PC-9 (cell line): ENCODE measurements at regions of chr20 and their contacts with region 1.

Region 1: GRCh38 chr20:5126512-5127203 is at the start of gene CDS2:
- DNase-seq: peak; percentile 97 to 100
- H3K4me3 ChIP-seq: peak within 1 kb of the TSS; percentile 69
- H3K27ac ChIP-seq: peak within 1 kb of the TSS; percentile 67
- H3K4me1 ChIP-seq: peaks cover 14% of the 10 kb centered on the region
- H3K27me3 ChIP-seq: no peaks in the 10 kb centered on the region
- CTCF ChIP-seq: peak; percentile 59; the same call in 1 of the 2 replicates
- total RNA-seq, gene CDS2: 37.0 and 42.8 TPM in 2 replicates

Region 2: DNA sequence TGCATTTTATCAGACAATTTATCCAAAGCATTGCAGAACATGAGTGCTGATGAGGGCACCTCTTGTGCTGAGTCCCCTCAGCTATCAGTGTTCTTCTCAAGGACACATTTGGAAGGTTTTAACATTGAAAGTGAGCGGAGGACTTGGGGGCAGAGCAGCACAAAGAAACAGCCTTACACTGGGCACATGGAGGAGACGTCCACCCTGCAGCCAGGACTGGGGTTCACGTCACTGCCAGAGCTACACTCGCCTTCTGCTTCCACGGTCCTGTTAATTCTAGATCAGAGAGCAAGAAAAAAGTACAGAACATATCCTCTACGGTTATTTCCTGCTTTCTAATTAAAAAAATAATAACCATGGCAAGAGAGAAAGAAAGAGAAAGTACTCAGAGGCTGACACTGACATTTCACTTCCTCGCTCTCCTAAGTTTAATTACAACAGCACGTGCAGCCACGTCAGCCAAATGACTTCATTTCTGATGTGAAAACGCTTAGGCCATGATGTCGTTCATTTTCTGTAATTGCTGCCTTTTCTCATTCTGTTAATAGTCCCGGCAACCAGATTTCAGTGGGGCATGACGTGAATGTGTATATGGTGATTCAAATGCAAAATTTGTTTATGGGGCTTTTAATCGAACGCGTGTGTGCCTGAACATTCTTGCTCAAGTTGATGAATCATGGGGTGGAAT is 399.8 kb before region 1 on chr20:
- CTCF ChIA-PET with region 1: no interaction called
- POLR2A ChIA-PET with region 1: interaction called, 21 read pairs
- intact Hi-C with region 1: no loop called
- DNase-seq: no peak
- H3K4me3 ChIP-seq: no peak overlapping the region
- H3K27ac ChIP-seq: no peak overlapping the region
- H3K4me1 ChIP-seq: no peaks in the 10 kb centered on the region
- H3K27me3 ChIP-seq: no peaks in the 10 kb centered on the region
- CTCF ChIP-seq: no peak

Region 3: GRCh38 chr20:5156675-5157448 is 30.2 kb after region 1 on chr20:
- CTCF ChIA-PET with region 1: interaction called, 16 read pairs
- POLR2A ChIA-PET with region 1: interaction called, 4 read pairs
- intact Hi-C with region 1: loop called (anchors 2 kb)
- DNase-seq: peak; percentile 51 to 91
- H3K4me3 ChIP-seq: no peak overlapping the region
- H3K27ac ChIP-seq: peak overlapping the region; percentile 98
- H3K4me1 ChIP-seq: peaks cover 91% of the 10 kb centered on the region
- H3K27me3 ChIP-seq: no peaks in the 10 kb centered on the region
- CTCF ChIP-seq: no peak

Region 4: DNA sequence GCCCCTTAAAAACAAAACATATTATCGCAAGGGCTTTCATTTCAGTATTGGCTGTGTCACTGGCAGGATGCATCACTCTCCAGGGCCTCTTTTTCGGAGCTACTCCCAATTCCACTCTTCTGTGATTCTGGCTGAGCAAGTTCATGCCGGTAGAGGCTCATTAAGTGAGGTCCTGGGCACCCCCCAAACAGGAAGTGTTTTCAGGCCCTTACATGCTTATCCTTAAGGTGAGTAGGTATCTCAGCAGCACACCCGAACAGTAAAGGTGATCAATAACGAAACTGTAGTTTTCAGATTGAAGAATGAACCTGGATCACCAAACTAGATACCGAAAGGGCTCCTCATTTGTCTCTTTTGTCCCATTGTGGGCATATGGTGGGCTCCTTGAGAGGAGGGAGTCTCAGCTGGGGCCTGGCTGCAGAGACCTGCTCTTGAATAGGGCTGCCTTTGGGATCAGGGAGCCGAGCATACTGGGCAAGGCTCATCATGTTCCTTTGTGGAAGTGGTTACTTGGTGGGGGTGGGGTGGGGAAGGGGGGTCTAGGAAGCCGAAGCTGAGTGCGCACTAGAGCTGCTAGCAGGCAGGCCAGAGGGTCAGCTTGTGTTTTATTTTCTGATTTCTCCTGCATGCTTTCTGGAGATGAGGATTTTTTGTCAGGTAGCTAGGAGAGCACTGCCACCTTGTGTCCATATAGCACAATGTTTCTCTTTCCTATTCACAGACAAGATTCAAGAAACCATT is 65.3 kb after region 1 on chr20:
- CTCF ChIA-PET with region 1: interaction called, 105 read pairs
- POLR2A ChIA-PET with region 1: interaction called, 6 read pairs
- intact Hi-C with region 1: loop called (anchors 1 kb)
- DNase-seq: peak; percentile 39 to 62
- H3K4me3 ChIP-seq: no peak overlapping the region
- H3K27ac ChIP-seq: no peak overlapping the region
- H3K4me1 ChIP-seq: no peaks in the 10 kb centered on the region
- H3K27me3 ChIP-seq: no peaks in the 10 kb centered on the region
- CTCF ChIP-seq: peak; percentile 87

Region 5: DNA sequence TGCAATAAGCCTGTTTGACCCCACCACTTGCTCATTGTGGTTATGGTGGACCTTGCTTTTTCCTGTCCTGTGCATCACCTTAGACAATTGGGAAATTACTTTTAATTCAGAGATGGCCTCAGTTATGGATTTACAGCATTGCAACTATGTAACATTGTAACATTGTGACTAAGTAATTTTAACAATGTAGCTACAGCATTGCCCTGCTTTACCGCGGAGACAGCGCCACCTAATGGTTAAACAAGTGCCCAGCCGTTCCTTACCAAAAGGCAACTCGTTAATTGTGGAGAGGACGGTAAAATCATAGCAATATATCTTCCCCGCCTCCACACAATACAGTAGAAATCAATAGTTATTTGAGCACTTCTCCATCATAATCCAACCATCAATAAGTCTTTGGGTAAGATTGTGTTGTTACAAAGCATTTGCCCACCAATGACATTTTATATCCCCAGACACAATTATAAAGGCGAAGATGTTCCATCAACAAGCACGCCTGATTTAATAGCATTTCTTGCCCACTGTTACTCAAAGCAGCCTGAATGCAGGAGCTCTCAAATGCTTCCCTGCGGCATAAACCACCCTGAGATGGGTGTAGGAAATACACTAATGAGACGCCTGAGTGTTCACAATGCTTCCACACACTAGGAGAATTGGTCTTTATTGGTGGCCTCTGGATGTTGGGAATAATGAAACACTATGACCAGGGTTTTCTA is 96.4 kb after region 1 on chr20:
- CTCF ChIA-PET with region 1: interaction called, 13 read pairs
- POLR2A ChIA-PET with region 1: no interaction called
- intact Hi-C with region 1: no loop called
- DNase-seq: peak; percentile 53 to 58
- H3K4me3 ChIP-seq: no peak overlapping the region
- H3K27ac ChIP-seq: no peak overlapping the region
- H3K4me1 ChIP-seq: no peaks in the 10 kb centered on the region
- H3K27me3 ChIP-seq: peaks cover 8% of the 10 kb centered on the region
- CTCF ChIP-seq: peak; percentile 86

Region 6: GRCh38 chr20:5820738-5821137 is 694.1 kb after region 1 on chr20:
- CTCF ChIA-PET with region 1: no interaction called
- POLR2A ChIA-PET with region 1: no interaction called
- intact Hi-C with region 1: no loop called
- DNase-seq: no peak
- H3K4me3 ChIP-seq: no peak overlapping the region
- H3K27ac ChIP-seq: no peak overlapping the region
- H3K4me1 ChIP-seq: peaks cover 4% of the 10 kb centered on the region; the same call in 1 of the 2 replicates
- H3K27me3 ChIP-seq: no peaks in the 10 kb centered on the region
- CTCF ChIP-seq: no peak